ENCODE measurements at regions of chr1 and their contacts with region 1.

Region 1: GRCh38 chr1:154344977-154345837 is 19.9 kb downstream of the ATP8B2 start:
- DNase-seq: peak; percentile 77
- ATAC-seq: no peak
- H3K4me3 Mint-ChIP-seq: no peak overlapping the region
- H3K27ac Mint-ChIP-seq: no peak overlapping the region
- H3K4me1 Mint-ChIP-seq: peaks cover 60% of the 10 kb centered on the region
- H3K27me3 Mint-ChIP-seq: no peaks in the 10 kb centered on the region

Region 2: GRCh38 chr1:154260127-154260526 is 85.1 kb before region 1 on chr1:
- CTCF ChIA-PET with region 1: no interaction called
- POLR2A ChIA-PET with region 1: no interaction called
- DNase-seq: no peak
- ATAC-seq: no peak
- H3K4me3 Mint-ChIP-seq: no peak overlapping the region
- H3K27ac Mint-ChIP-seq: peak overlapping the region; percentile 46
- H3K4me1 Mint-ChIP-seq: peaks cover 22% of the 10 kb centered on the region
- H3K27me3 Mint-ChIP-seq: no peaks in the 10 kb centered on the region

Region 3: GRCh38 chr1:154324669-154325582 is 20.3 kb before region 1 on chr1 and contains the start of gene ATP8B2:
- CTCF ChIA-PET with region 1: interaction called, 85 read pairs
- POLR2A ChIA-PET with region 1: interaction called, 3 read pairs
- DNase-seq: peak; percentile 87
- ATAC-seq: peak; percentile 59
- H3K4me3 Mint-ChIP-seq: peak within 1 kb of the TSS; percentile 92
- H3K27ac Mint-ChIP-seq: peak within 1 kb of the TSS; percentile 89
- H3K4me1 Mint-ChIP-seq: peaks cover 45% of the 10 kb centered on the region
- H3K27me3 Mint-ChIP-seq: peaks cover 21% of the 10 kb centered on the region
- total RNA-seq, gene ATP8B2: 65.3 to 71.6 TPM

Region 4: DNA sequence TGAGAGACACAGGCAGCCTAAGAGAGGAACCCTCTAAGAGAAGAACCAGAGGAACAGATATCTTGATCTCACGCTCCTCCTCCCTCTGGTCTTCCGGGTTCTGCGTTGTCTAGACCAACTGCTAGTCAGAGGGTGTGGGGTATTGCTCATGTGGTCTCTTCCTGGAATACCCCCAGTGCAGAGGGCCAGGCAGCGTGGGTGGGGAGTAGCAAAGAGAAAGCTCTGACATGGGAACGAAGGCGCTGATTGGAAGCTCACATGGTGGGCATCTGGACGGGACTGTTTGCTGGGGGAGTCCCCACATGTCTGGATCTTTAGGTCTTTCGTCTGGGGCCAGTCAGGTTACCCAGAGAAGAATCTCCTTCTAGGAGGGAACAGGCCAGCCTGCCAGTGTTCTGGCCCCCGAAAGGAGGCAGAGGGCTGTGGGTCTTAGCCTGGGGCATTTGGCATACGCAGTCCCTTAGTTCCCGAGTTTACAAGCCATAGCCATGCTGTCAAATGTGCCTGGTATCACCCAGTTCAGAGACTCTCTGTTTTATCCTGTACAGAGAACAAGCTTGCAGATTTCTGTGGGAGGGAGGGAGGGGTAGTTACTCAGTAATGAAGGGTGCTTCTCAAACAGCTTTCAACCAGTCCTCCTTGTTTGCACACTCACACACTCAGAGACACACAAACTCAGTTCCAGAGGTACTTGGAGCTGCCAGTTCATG is 41.6 kb after region 1 on chr1:
- CTCF ChIA-PET with region 1: no interaction called
- POLR2A ChIA-PET with region 1: no interaction called
- DNase-seq: peak; percentile 55
- ATAC-seq: peak; percentile 91
- H3K4me3 Mint-ChIP-seq: peak overlapping the region; percentile 51
- H3K27ac Mint-ChIP-seq: peak overlapping the region; percentile 88
- H3K4me1 Mint-ChIP-seq: peaks cover 26% of the 10 kb centered on the region
- H3K27me3 Mint-ChIP-seq: peaks cover 3% of the 10 kb centered on the region